Astrocyte of the cerebellum (primary cell): ENCODE measurements at regions of chr9 and their contacts with region 1.

Region 1: DNA sequence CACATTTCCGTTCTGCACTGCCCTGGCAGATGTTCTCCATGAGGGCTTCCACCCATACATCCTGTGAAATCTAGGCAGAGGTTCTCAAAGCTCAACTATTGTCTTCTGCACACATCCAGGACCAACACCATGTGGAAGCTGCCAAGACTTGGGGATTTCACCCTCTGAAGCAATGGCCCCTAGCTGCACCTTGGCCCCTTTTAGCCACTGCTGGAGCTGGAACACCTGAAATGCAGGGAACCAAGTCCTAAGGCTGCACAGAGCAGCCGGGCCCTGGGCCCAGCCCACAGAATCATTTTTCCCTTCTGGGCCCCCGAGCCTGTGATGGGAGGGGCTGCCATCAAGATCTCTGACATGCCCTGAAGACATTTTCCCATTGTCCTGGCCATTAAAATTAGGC is 228.7 kb downstream of the ANXA1 start:
- DNase-seq: no peak
- H3K4me3 ChIP-seq: no peak overlapping the region
- CTCF ChIP-seq: no peak

Region 2: DNA sequence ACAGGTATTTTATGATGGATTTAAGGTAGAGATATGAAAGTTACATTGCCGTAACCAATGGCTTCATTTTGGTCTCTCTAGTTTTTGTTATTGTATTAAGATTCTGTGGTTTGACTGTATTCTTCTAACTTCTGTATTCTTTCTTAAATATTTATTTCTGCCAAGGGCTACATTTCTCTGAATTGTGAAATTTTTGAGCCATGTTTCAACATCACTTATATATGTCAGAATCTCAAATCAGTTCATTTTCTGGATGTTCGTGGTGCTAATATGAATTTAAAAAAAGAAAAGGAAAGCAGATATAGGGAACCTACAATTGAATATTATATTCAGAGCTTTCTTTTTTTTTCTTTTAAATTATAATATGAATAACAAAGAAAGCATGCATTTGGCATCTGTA is 86.1 kb before region 1 on chr9:
- in situ Hi-C with region 1: loop called (anchors 5 kb)
- DNase-seq: no peak
- H3K4me3 ChIP-seq: no peak overlapping the region
- CTCF ChIP-seq: no peak

Region 3: GRCh38 chr9:73497796-73498195 is 117.4 kb after region 1 on chr9:
- in situ Hi-C with region 1: no loop called
- DNase-seq: no peak
- H3K4me3 ChIP-seq: no peak overlapping the region
- CTCF ChIP-seq: no peak